Left lung (tissue), 14 donors: ENCODE measurements at regions of chr19 and their contacts with region 1.

Region 1: GRCh38 chr19:41531438-41532311 is 44.3 kb upstream of the CEACAM21 start:
- DNase-seq: peak; percentile 65 to 88 (median 78)
- ATAC-seq: peak; percentile 94
- H3K4me3 ChIP-seq: peak overlapping the region in 1 of 2 donors; percentile 27
- H3K27ac ChIP-seq: peak overlapping the region; percentile 86 to 98
- H3K4me1 ChIP-seq: peaks cover 5 to 71% of the 10 kb centered on the region in 2 donors
- H3K27me3 ChIP-seq: peaks cover under 1 to 2% of the 10 kb centered on the region in 2 donors
- CTCF ChIP-seq: no peak

Region 2: DNA sequence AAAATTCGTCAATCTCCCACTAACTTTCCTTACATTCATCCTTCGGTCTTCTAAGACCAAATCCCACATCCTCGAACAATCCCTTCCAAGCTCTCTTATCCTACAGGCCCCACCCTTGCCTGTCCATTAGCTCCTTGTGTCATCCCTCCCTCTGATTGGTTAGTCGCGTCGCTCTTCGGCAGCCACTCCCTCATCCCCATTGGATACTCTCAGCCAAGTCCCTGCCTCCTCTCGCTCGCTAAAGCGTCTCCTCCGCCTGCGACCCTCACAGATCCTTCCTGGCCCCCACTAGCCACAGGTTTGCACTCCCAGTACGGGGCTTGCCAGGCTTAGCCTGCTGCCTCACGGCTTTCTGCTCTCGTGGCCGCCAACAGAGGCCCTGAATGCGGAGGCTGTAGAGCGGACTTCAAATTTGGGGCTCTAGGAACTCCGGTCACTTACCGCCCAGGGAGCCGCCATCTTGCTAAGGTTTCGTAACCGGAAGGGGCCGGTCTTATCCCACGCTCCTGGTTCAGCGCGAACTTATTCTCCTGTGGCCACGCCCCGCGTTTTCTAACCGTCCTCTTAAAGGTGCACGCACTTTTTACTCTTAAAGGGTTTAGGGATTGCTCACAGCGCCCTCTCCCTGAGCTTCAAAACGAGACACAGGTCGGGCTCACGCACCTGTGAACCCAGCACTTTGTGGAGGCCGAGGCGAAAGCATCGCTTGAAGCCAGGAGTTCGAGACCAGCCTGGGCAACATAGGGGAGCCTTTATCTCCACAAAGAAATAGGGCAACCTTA is 92.0 kb before region 1 on chr19 and contains the start of gene DMAC2:
- intact Hi-C with region 1: loop called in 1 of 2 experiments (anchors 10 kb)
- DNase-seq: peak; percentile 96 to 98 (median 96)
- ATAC-seq: peak; percentile 97
- H3K4me3 ChIP-seq: peak within 1 kb of the TSS; percentile 62 to 74
- H3K27ac ChIP-seq: peak within 1 kb of the TSS; percentile 93 to 94
- H3K4me1 ChIP-seq: peaks cover 5 to 23% of the 10 kb centered on the region in 2 donors
- H3K27me3 ChIP-seq: no peaks in the 10 kb centered on the region
- CTCF ChIP-seq: peak; percentile 27
- polyA plus RNA-seq, gene DMAC2: 48.4 to 64.6 (median 58.4) TPM

Region 3: DNA sequence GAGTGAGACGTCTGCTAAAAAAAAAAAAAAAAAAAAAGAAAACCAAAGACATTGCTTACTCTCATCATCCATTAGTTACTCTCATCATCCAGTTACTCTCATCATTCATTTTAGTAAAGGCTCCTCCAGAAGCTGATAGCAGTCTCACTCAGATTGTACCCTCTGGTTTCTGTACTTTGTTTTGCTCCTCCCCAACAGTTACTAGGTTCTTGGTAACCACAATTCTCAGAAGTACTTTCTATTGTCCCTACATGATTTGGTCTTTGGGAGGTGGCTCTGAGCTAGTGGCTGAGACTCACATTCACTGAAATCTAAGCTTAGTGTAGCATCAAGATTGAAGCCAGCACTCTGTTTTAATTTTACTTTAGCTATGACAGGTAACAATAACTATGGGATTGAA is 74.4 kb before region 1 on chr19:
- intact Hi-C with region 1: loop called in 1 of 2 experiments (anchors 10 kb)
- DNase-seq: no peak
- ATAC-seq: no peak
- H3K4me3 ChIP-seq: no peak overlapping the region
- H3K27ac ChIP-seq: peak overlapping the region; percentile 19 to 24
- H3K4me1 ChIP-seq: peaks cover 5 to 16% of the 10 kb centered on the region in 2 donors
- H3K27me3 ChIP-seq: peaks cover 0 to 39% of the 10 kb centered on the region in 2 donors
- CTCF ChIP-seq: no peak